Common myeloid progenitor, CD34-positive (primary cell): ENCODE measurements at regions of chr1 and their contacts with region 1.

Region 1: GRCh38 chr1:159214149-159214760 is 9.6 kb downstream of the ACKR1 start:
- DNase-seq: peak; percentile 40 to 57 (median 48)
- H3K4me3 ChIP-seq: no peak overlapping the region
- H3K27ac ChIP-seq: no peak overlapping the region
- H3K4me1 ChIP-seq: peaks cover 0 to 3% (median 0%) of the 10 kb centered on the region in 4 experiments
- H3K27me3 ChIP-seq: peaks cover 0 to 9% (median 0%) of the 10 kb centered on the region in 5 experiments

Region 2: GRCh38 chr1:159132271-159132881 is 81.9 kb before region 1 on chr1:
- CTCF ChIA-PET with region 1: interaction called, 58 read pairs
- POLR2A ChIA-PET with region 1: no interaction called
- DNase-seq: peak; percentile 57 to 86 (median 74)
- H3K4me3 ChIP-seq: no peak overlapping the region
- H3K27ac ChIP-seq: no peak overlapping the region
- H3K4me1 ChIP-seq: no peaks in the 10 kb centered on the region
- H3K27me3 ChIP-seq: peaks cover 0 to 6% (median 2%) of the 10 kb centered on the region in 5 experiments

Region 3: GRCh38 chr1:159161001-159161718 is 53.1 kb before region 1 on chr1:
- CTCF ChIA-PET with region 1: interaction called, 230 read pairs
- POLR2A ChIA-PET with region 1: no interaction called
- DNase-seq: peak; percentile 75 to 84 (median 80)
- H3K4me3 ChIP-seq: no peak overlapping the region
- H3K27ac ChIP-seq: no peak overlapping the region
- H3K4me1 ChIP-seq: no peaks in the 10 kb centered on the region
- H3K27me3 ChIP-seq: peaks cover 0 to 10% (median 4%) of the 10 kb centered on the region in 5 experiments

Region 4: GRCh38 chr1:159197561-159198557 is 16.4 kb before region 1 on chr1:
- CTCF ChIA-PET with region 1: interaction called, 198 read pairs
- POLR2A ChIA-PET with region 1: no interaction called
- DNase-seq: peak; percentile 78 to 90 (median 83)
- H3K4me3 ChIP-seq: peak overlapping the region in 1 of 7 experiments; percentile 5
- H3K27ac ChIP-seq: no peak overlapping the region
- H3K4me1 ChIP-seq: peaks cover 0 to 46% (median 31%) of the 10 kb centered on the region in 4 experiments
- H3K27me3 ChIP-seq: peaks cover 0 to 2% (median 0%) of the 10 kb centered on the region in 5 experiments

Region 5: DNA sequence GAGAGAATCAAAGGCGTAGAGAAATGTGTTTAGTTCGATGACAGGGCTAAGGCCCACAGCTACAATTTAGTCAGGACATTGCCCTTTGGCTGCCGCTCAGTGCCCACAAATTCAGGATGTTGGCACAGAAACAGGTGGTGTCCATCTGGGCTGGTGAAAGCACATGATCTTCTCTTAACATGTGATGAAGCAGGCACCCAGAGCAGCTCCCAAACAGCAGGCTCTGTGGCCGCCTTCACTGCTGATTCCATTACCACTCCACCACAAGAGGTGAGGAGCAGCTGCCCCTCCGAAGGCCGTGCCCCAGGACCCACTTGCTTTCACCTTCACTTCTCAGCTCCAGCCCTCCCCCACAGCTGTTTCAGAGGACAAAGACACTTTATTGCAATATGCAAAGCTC is 15.2 kb after region 1 on chr1:
- CTCF ChIA-PET with region 1: interaction called, 18 read pairs
- POLR2A ChIA-PET with region 1: no interaction called
- DNase-seq: no peak
- H3K4me3 ChIP-seq: no peak overlapping the region
- H3K27ac ChIP-seq: no peak overlapping the region
- H3K4me1 ChIP-seq: no peaks in the 10 kb centered on the region
- H3K27me3 ChIP-seq: peaks cover 0 to 6% (median 0%) of the 10 kb centered on the region in 5 experiments